SK-N-SH (cell line): ENCODE measurements at regions of chr20 and their contacts with region 1.

Region 1: GRCh38 chr20:62900052-62900691 is 26.1 kb downstream of the DIDO1 start:
- DNase-seq: peak; percentile 94
- H3K4me3 ChIP-seq: no peak overlapping the region; a peak in 1 of 4 replicates
- H3K27ac ChIP-seq: peak overlapping the region; percentile 13 to 39; a peak in 2 of 4 replicates
- H3K4me1 ChIP-seq: peaks cover 4 to 15% of the 10 kb centered on the region in 2 experiments; a peak in 2 of 4 replicates
- H3K27me3 ChIP-seq: no peaks in the 10 kb centered on the region
- CTCF ChIP-seq: peak; percentile 77
- EP300 ChIP-seq: no peak
- RAD21 ChIP-seq: peak; percentile 76

Region 2: GRCh38 chr20:62875419-62876361 is 24.5 kb before region 1 on chr20:
- CTCF ChIA-PET with region 1: interaction called, 86 read pairs
- POLR2A ChIA-PET with region 1: interaction called, 3 read pairs
- DNase-seq: peak; percentile 93
- H3K4me3 ChIP-seq: peak overlapping the region in 1 of 2 experiments; percentile 31; a peak in 3 of 4 replicates
- H3K27ac ChIP-seq: peak overlapping the region; percentile 82 to 93
- H3K4me1 ChIP-seq: peaks cover 4 to 19% of the 10 kb centered on the region in 2 experiments; a peak in 3 of 4 replicates
- H3K27me3 ChIP-seq: no peaks in the 10 kb centered on the region
- CTCF ChIP-seq: peak; percentile 58
- EP300 ChIP-seq: peak in 1 of 2 experiments; percentile 26; a peak in 2 of 4 replicates
- RAD21 ChIP-seq: peak; percentile 59

Region 3: DNA sequence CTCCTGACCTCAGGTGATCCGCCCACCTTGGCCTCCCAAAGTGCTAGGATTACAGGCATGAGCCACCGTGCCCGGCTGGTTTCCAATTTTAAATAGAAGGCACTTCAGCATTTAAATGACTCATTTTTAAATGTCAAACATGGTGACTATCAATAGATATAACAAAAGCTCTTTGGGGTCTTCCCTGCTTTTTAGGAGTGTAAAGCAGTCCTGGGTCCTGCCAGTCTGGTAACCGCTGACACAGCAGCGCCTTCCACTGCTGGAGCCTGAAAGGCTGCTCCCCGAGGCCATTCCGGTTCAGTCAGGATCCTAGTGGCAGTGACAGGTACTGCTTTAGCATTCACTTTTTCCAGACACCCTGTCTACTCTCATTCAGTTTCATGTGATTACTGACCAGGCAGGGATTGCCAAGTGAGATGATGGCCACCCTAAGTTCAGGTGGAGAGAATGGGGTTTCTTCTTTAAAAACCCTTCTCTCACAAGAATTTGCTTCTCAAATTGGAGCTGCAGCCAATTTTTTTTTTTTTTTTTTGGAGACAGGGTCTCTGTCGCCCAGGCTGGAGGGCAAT is 21.0 kb after region 1 on chr20:
- CTCF ChIA-PET with region 1: interaction called, 181 read pairs
- POLR2A ChIA-PET with region 1: no interaction called
- DNase-seq: peak; percentile 81
- H3K4me3 ChIP-seq: no peak overlapping the region
- H3K27ac ChIP-seq: peak overlapping the region in 1 of 2 experiments; percentile 35; a peak in 1 of 4 replicates
- H3K4me1 ChIP-seq: peaks cover 26 to 37% of the 10 kb centered on the region in 2 experiments; a peak in 3 of 4 replicates
- H3K27me3 ChIP-seq: no peaks in the 10 kb centered on the region
- CTCF ChIP-seq: peak; percentile 65
- EP300 ChIP-seq: 0 out of 4 replicates have a peak, but pooled peaks of 1 of the 2 experiments have one; percentile 16
- RAD21 ChIP-seq: peak; percentile 50

Region 4: DNA sequence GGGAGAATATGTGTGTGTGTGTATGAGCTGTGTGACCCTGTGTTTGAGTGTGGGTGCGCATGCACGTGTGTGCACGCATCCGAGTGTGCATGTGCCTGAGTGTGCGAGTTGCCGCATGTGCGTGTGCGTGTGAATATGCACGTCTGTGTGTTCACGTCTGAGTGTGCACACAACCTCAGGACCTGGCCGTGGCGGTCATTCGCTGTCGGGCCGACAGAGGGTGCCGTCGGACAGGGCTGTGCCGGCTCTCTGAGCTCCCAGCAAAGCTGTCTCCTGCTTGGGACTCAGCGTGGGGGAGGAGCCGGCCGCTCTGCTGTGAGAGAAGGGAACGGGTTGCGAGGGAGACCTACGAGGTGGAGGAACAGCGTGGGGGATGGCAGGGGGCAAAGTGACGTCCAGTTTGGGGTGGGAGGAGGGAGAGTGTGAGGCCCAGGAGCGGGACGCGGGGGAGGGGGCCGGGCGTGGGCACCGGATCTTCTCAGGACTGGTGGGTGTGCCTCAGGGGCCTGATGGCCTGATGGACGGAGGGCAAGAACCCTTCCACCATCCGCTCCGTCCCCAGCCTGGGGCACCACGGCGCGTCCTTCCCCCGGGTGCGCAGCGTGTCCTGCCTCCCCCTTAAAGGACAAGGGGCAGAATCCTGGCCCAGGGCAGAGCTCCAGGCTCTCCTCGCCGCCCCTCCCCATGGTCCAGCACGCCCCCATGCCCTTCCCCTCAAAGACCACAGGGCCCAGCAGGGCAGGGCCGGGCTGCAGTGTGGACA is 72.3 kb after region 1 on chr20:
- CTCF ChIA-PET with region 1: interaction called, 10 read pairs
- POLR2A ChIA-PET with region 1: no interaction called
- DNase-seq: peak; percentile 96
- H3K4me3 ChIP-seq: peak overlapping the region; percentile 1 to 51; a peak in 2 of 4 replicates
- H3K27ac ChIP-seq: no peak overlapping the region
- H3K4me1 ChIP-seq: peaks cover 0 to 3% of the 10 kb centered on the region in 2 experiments; a peak in 1 of 4 replicates
- H3K27me3 ChIP-seq: peaks cover 43% of the 10 kb centered on the region
- CTCF ChIP-seq: peak; percentile 79
- EP300 ChIP-seq: no peak
- RAD21 ChIP-seq: peak; percentile 93